Prostate gland (tissue), 2 donors: ENCODE measurements at regions of chr5 and their contacts with region 1.

Region 1: DNA sequence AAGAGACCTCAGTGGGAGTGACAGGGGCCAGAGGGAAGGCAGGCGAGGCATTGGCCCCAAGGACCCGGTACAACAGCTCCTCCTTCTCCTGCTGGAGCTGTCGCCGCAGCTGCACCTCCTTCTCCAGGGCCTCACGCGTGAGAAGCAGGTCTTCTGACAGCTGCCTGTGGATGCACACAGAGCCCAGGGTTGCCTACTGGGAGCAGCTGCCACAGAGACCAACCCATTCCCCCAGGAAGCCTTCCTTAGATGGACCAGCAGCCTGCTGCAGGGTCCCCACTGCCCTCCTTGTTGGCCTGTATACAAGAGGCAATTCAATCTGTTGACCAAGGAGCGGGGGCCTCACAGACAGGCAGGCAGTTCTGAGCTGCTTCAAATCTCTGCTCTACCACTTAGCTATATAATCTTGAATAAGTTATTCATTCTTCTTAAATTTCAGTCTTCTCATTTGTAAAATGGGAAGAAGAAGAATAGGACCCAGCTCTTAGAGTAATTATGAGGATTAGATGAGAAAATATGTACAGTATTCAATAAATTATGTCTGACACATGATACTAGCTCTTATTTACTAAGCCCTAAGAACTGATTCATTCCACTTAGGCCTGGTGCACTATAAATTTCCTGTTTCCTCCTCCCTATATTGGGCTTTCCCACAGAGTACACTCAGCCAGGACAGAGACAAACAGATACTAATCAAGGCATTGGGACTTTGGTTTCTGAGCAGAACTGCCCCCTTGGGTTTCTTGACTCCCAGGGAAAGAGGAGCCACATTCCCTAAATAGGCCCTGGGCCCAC is 26.1 kb upstream of the ANXA6 start:
- DNase-seq: no peak
- H3K4me3 ChIP-seq: no peak overlapping the region
- H3K27ac ChIP-seq: no peak overlapping the region
- H3K4me1 ChIP-seq: no peaks in the 10 kb centered on the region
- H3K27me3 ChIP-seq: no peaks in the 10 kb centered on the region
- CTCF ChIP-seq: no peak
- POLR2A ChIP-seq: no peak

Region 2: GRCh38 chr5:151298063-151298855 is 114.6 kb after region 1 on chr5:
- intact Hi-C with region 1: loop called (anchors 10 kb)
- DNase-seq: no peak
- H3K4me3 ChIP-seq: no peak overlapping the region
- H3K27ac ChIP-seq: no peak overlapping the region
- H3K4me1 ChIP-seq: no peaks in the 10 kb centered on the region
- H3K27me3 ChIP-seq: no peaks in the 10 kb centered on the region
- CTCF ChIP-seq: peak in 2 of 4 experiments; percentile 31 to 36
- POLR2A ChIP-seq: no peak